ENCODE measurements at regions of chr4 and their contacts with region 1.

Region 1: DNA sequence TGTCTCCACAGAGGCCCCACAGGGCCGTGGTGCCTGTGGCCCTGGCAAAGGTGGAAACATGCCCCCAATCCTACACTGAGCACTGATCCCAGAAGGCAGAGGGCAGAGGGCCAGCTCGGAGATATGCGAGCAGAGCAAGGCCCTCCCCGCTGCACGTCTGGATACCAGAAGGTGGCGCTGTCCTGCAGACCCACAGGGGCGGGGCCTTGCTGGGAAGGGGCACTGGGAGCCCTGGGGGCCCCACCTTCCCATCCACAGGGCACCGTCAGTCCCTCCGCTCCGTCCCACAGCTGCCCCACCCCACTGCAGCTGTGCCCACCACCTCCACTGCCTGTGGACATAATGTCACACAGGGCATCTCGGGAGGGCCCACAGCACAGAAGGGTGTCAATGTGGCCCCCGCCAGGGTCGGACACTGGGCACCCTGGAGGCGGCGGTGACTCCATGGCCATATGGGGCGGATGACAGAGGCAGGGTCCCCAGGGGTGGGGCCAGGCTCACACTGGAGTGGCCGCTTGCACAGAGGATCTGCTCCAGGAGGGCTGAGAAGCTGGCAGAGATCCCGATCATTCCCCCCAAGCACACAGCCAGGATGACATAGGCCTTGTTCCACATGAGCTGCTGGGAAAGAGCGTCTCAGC is 4.8 kb downstream of the SLC49A3 start:
- DNase-seq: peak in 1 of 2 experiments; percentile 91
- H3K4me3 ChIP-seq: no peak overlapping the region
- H3K27ac ChIP-seq: no peak overlapping the region
- H3K4me1 ChIP-seq: peaks cover 0 to 25% (median 13%) of the 10 kb centered on the region in 4 experiments; a peak in 6 of 7 replicates
- H3K27me3 ChIP-seq: no peaks in the 10 kb centered on the region; a peak in 2 of 7 replicates
- CTCF ChIP-seq: peak in 2 of 3 experiments; percentile 82 to 99; a peak in 3 of 4 replicates
- EP300 ChIP-seq: no peak
- POLR2A ChIP-seq: 0 out of 3 replicates have a peak, but pooled peaks of 1 of the 2 experiments have one; percentile 10
- RAD21 ChIP-seq: peak; percentile 55 to 65

Region 2: GRCh38 chr4:700587-701264 is 16.6 kb after region 1 on chr4:
- CTCF ChIA-PET with region 1: interaction called, 65 read pairs
- POLR2A ChIA-PET with region 1: interaction called, 12 read pairs
- DNase-seq: no peak
- H3K4me3 ChIP-seq: no peak overlapping the region
- H3K27ac ChIP-seq: no peak overlapping the region
- H3K4me1 ChIP-seq: peaks cover 0 to 4% (median under 1%) of the 10 kb centered on the region in 4 experiments; a peak in 4 of 7 replicates
- H3K27me3 ChIP-seq: peaks cover 0 to 5% (median 3%) of the 10 kb centered on the region in 4 experiments; a peak in 3 of 7 replicates
- CTCF ChIP-seq: peak in 2 of 3 experiments; percentile 28 to 35; a peak in 2 of 4 replicates
- EP300 ChIP-seq: no peak
- POLR2A ChIP-seq: no peak; a peak in 1 of 3 replicates
- RAD21 ChIP-seq: peak; percentile 24 to 45; a peak in 3 of 4 replicates

Region 3: DNA sequence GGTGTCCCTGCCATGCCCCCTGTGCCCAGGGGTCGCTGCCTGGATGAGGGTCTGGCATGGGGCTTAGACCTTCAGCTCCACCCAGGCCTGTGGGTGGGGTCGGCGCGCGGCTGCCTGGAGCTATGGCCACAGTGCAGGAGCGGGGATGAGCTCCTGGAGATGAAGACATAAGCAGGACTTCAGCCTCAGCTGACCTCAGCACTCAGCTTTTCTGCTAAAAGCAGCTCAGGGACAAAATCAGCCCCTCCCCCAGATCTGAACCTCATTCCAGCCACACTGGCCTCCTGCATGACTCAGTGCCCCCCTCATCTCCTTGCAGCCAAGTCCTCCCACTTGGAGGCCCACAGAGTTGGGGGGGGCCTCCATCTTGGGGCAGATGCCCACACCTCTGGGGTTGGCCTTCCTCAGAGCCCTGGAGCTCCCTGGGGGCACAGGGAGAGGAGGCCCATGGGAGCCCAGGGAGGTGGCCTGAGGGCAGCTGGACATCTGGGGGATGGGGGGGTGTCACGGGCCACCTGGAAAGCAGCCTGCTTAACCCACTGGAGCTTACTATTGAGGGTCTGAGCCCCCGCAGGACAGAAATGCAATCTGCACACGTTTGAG is 161.2 kb after region 1 on chr4:
- CTCF ChIA-PET with region 1: no interaction called
- POLR2A ChIA-PET with region 1: no interaction called
- DNase-seq: no peak
- H3K4me3 ChIP-seq: no peak overlapping the region
- H3K27ac ChIP-seq: no peak overlapping the region
- H3K4me1 ChIP-seq: peaks cover 0 to 4% (median 0%) of the 10 kb centered on the region in 4 experiments; a peak in 1 of 7 replicates
- H3K27me3 ChIP-seq: no peaks in the 10 kb centered on the region
- CTCF ChIP-seq: no peak
- EP300 ChIP-seq: no peak
- POLR2A ChIP-seq: no peak
- RAD21 ChIP-seq: no peak

Region 4: DNA sequence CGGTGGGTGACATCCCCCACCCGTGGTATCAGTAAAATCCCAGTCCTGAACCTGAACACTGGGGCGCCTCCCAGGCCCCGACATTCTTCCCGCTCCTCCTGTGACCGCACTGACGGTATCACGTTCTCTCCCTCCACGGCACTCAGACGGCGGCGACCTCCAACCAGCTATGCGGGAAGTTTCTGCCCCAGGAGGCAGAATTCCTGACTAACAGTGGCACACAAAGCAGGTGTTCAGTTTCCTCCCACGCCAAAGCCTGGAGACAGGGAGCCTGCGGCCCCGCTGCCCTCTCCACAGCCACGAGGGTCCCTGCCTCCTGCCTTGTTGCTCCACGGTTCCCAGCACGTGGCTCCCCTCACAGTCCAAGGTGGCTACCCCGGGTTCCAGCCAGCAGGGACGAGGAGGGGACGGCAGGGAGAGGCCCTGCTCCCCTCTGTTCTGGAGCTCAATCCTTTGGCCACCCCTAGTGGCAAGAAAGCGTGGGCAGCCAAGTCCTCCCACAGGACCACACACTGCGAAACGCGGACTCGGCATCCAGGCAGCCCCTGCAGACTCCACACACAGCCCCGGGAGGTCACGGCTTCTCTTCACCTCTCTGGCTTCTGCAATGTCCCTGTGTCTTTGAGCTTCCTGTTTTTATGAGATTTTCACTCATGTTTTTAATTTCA is 549.7 kb after region 1 on chr4:
- CTCF ChIA-PET with region 1: no interaction called
- POLR2A ChIA-PET with region 1: no interaction called
- DNase-seq: no peak
- H3K4me3 ChIP-seq: no peak overlapping the region
- H3K27ac ChIP-seq: peak overlapping the region; percentile 49; the same call in 1 of the 2 replicates
- H3K4me1 ChIP-seq: no peaks in the 10 kb centered on the region
- H3K27me3 ChIP-seq: no peaks in the 10 kb centered on the region
- CTCF ChIP-seq: no peak
- EP300 ChIP-seq: no peak
- POLR2A ChIP-seq: no peak
- RAD21 ChIP-seq: no peak

Measured in H1 (cell line).